ENCODE measurements at regions of chr15 and their contacts with region 1.

Region 1: GRCh38 chr15:40323239-40323952 is at the start of gene INAFM2:
- DNase-seq: peak; percentile 79 to 97 (median 93)
- ATAC-seq: peak; percentile 90
- H3K4me3 ChIP-seq: peak within 1 kb of the TSS; percentile 34 to 45
- H3K4me3 Mint-ChIP-seq: peak within 1 kb of the TSS; percentile 80
- H3K27ac ChIP-seq: peak within 1 kb of the TSS in 1 of 2 experiments; percentile 47
- H3K27ac Mint-ChIP-seq: peak within 1 kb of the TSS; percentile 74
- H3K4me1 ChIP-seq: peaks cover 21% of the 10 kb centered on the region
- H3K4me1 Mint-ChIP-seq: peaks cover 22% of the 10 kb centered on the region
- H3K27me3 ChIP-seq: no peaks in the 10 kb centered on the region
- H3K27me3 Mint-ChIP-seq: no peaks in the 10 kb centered on the region
- CTCF ChIP-seq: peak; percentile 60
- total RNA-seq, gene INAFM2: 4.3 to 8.1 TPM

Region 2: GRCh38 chr15:40160689-40161688 is 162.4 kb before region 1 on chr15 and contains the start of gene BUB1B:
- CTCF ChIA-PET with region 1: no interaction called
- POLR2A ChIA-PET with region 1: no interaction called
- intact Hi-C with region 1: loop called in 1 of 2 experiments (anchors 5 kb)
- DNase-seq: peak; percentile 82 to 96 (median 91)
- ATAC-seq: peak; percentile 98
- H3K4me3 ChIP-seq: peak within 1 kb of the TSS; percentile 61 to 71
- H3K4me3 Mint-ChIP-seq: no peak within 1 kb of the TSS
- H3K27ac ChIP-seq: no peak within 1 kb of the TSS
- H3K27ac Mint-ChIP-seq: no peak within 1 kb of the TSS
- H3K4me1 ChIP-seq: peaks cover 10% of the 10 kb centered on the region
- H3K4me1 Mint-ChIP-seq: no peaks in the 10 kb centered on the region
- H3K27me3 ChIP-seq: no peaks in the 10 kb centered on the region
- H3K27me3 Mint-ChIP-seq: no peaks in the 10 kb centered on the region
- CTCF ChIP-seq: no peak
- total RNA-seq, gene BUB1B: 0.47 to 1.2 TPM

Region 3: DNA sequence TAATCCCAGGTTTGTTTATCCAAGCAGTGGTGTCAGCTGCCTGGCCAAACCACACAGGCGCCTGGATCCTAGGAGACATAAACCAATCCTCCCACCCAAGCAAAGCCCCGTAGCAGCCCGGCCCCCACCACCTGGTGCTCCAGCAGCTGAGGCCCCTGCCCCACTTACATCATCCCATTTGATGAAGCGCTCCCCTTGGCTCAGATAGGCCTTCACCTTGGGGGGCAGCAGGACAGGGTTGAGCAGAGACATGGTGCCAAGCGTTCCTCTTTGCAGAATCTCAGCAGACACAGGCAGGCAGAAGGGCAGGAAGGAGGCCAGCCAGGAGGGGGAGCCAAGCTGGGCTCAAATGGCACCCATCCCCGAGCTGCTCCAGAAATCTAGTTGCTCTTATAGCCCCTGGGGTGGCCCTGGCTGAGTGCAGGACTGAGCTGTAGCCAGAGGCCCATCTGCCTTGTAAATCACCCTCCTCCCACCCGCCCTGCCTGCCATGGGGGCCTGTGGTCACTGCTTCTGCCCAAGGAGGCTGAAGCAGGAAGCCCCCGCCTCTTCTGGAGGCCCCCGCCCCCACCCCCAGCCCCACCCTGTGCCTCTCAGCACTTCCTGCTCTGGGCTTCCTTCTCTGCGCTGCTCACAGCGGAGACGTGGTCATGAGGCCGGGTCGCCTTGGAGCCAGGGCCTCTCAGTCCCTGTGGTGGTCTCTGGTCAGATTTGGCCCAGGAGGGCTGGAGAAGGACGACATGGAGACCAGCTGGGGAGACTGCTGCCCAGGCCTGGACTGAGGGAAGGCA is 15.8 kb before region 1 on chr15 and contains the start of gene PLCB2:
- CTCF ChIA-PET with region 1: interaction called, 114 read pairs
- POLR2A ChIA-PET with region 1: interaction called, 68 read pairs
- intact Hi-C with region 1: loop called (anchors 1 kb)
- DNase-seq: peak; percentile 45 to 86 (median 72)
- ATAC-seq: peak; percentile 76
- H3K4me3 ChIP-seq: peak within 1 kb of the TSS; percentile 92 to 97
- H3K4me3 Mint-ChIP-seq: peak within 1 kb of the TSS; percentile 95
- H3K27ac ChIP-seq: peak within 1 kb of the TSS; percentile 76 to 87
- H3K27ac Mint-ChIP-seq: peak within 1 kb of the TSS; percentile 96
- H3K4me1 ChIP-seq: peaks cover 31% of the 10 kb centered on the region
- H3K4me1 Mint-ChIP-seq: peaks cover 46% of the 10 kb centered on the region
- H3K27me3 ChIP-seq: no peaks in the 10 kb centered on the region
- H3K27me3 Mint-ChIP-seq: no peaks in the 10 kb centered on the region
- CTCF ChIP-seq: peak; percentile 57
- total RNA-seq, gene PLCB2: 154 to 167 TPM

Region 4: GRCh38 chr15:40357723-40358470 is 34.5 kb after region 1 on chr15 and contains the start of gene DISP2:
- CTCF ChIA-PET with region 1: interaction called, 5 read pairs
- POLR2A ChIA-PET with region 1: no interaction called
- intact Hi-C with region 1: loop called (anchors 1 to 5 kb)
- DNase-seq: peak; percentile 82 to 93 (median 88)
- ATAC-seq: peak; percentile 94
- H3K4me3 ChIP-seq: peak within 1 kb of the TSS; percentile 63 to 65
- H3K4me3 Mint-ChIP-seq: peak within 1 kb of the TSS; percentile 83
- H3K27ac ChIP-seq: no peak within 1 kb of the TSS
- H3K27ac Mint-ChIP-seq: no peak within 1 kb of the TSS
- H3K4me1 ChIP-seq: peaks cover 13% of the 10 kb centered on the region
- H3K4me1 Mint-ChIP-seq: peaks cover 9% of the 10 kb centered on the region
- H3K27me3 ChIP-seq: no peaks in the 10 kb centered on the region
- H3K27me3 Mint-ChIP-seq: peaks cover 2% of the 10 kb centered on the region
- CTCF ChIP-seq: no peak
- total RNA-seq, gene DISP2: 0.05 to 0.25 TPM

Region 5: GRCh38 chr15:40367686-40368611 is 44.6 kb after region 1 on chr15:
- CTCF ChIA-PET with region 1: interaction called, 5 read pairs
- POLR2A ChIA-PET with region 1: no interaction called
- intact Hi-C with region 1: loop called in 1 of 2 experiments (anchors 1 kb)
- DNase-seq: peak; percentile 74 to 96 (median 85)
- ATAC-seq: peak; percentile 95
- H3K4me3 ChIP-seq: peak overlapping the region; percentile 58 to 75
- H3K4me3 Mint-ChIP-seq: peak overlapping the region; percentile 83
- H3K27ac ChIP-seq: peak overlapping the region; percentile 17 to 62
- H3K27ac Mint-ChIP-seq: peak overlapping the region; percentile 84
- H3K4me1 ChIP-seq: peaks cover 23% of the 10 kb centered on the region
- H3K4me1 Mint-ChIP-seq: peaks cover 19% of the 10 kb centered on the region
- H3K27me3 ChIP-seq: no peaks in the 10 kb centered on the region
- H3K27me3 Mint-ChIP-seq: no peaks in the 10 kb centered on the region
- CTCF ChIP-seq: peak; percentile 92

Region 6: GRCh38 chr15:40421246-40422157 is 98.1 kb after region 1 on chr15:
- CTCF ChIA-PET with region 1: interaction called, 12 read pairs
- POLR2A ChIA-PET with region 1: no interaction called
- intact Hi-C with region 1: loop called in 1 of 2 experiments (anchors 1 kb)
- DNase-seq: peak; percentile 65 to 89 (median 80)
- ATAC-seq: peak; percentile 99
- H3K4me3 ChIP-seq: no peak overlapping the region
- H3K4me3 Mint-ChIP-seq: no peak overlapping the region
- H3K27ac ChIP-seq: no peak overlapping the region
- H3K27ac Mint-ChIP-seq: no peak overlapping the region
- H3K4me1 ChIP-seq: peaks cover 6% of the 10 kb centered on the region
- H3K4me1 Mint-ChIP-seq: no peaks in the 10 kb centered on the region
- H3K27me3 ChIP-seq: no peaks in the 10 kb centered on the region
- H3K27me3 Mint-ChIP-seq: no peaks in the 10 kb centered on the region
- CTCF ChIP-seq: peak; percentile 80

Region 7: DNA sequence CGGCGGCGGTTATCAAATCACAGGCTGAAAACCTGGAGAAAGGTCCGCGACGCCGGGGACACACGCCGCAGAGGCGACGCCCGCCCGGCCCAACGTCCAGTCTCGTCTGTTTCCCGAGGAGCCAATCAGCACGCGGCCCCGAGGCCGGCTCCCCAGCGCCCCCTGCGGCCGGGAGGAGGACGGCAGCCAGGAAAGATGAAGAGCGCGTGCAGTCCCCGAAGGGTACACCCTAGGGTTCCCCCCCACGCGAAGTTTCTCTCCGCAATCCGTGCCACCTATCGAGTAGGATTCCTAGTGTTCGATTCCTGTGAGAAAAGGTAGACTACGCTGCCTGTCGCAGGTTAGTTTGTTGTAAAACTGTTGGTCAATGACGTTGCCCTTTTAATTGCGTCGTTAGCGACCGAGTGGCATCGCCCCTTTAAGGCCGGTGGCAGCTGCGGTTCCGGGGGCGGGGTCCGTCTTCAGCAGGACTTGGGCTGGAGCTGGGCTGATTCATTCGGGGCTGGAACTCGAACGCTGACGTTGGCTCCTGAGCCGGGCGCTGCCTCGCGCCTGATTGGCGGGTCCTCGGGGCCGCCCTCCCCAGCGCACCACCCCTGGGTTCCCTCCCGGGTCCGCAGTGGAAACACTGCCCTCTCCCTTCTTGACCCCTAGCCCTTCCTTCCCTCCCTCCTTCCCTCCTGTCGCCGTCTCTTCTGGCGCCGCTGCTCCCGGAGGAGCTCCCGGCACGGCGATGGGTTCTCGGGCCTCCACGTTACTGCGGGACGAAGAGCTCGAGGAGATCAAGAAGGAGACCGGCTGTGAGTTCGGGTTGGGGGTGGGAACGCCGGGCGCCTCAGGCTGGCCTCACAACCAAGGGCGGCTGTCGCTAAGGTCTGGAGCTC is 907.5 kb after region 1 on chr15 and contains the starts of genes CHP1 and EXD1:
- CTCF ChIA-PET with region 1: no interaction called
- POLR2A ChIA-PET with region 1: no interaction called
- intact Hi-C with region 1: loop called in 1 of 2 experiments (anchors 5 kb)
- DNase-seq: peak; percentile 89 to 97 (median 94)
- ATAC-seq: peak; percentile 95
- H3K4me3 ChIP-seq: peak within 1 kb of the TSS; percentile 83 to 89
- H3K4me3 Mint-ChIP-seq: peak within 1 kb of the TSS; percentile 89
- H3K27ac ChIP-seq: peak within 1 kb of the TSS; percentile 74 to 85
- H3K27ac Mint-ChIP-seq: peak within 1 kb of the TSS; percentile 90
- H3K4me1 ChIP-seq: peaks cover 27% of the 10 kb centered on the region
- H3K4me1 Mint-ChIP-seq: peaks cover 37% of the 10 kb centered on the region
- H3K27me3 ChIP-seq: no peaks in the 10 kb centered on the region
- H3K27me3 Mint-ChIP-seq: no peaks in the 10 kb centered on the region
- CTCF ChIP-seq: peak; percentile 99
- total RNA-seq, gene CHP1: 25.6 to 28.9 TPM
- total RNA-seq, gene EXD1: not detected

Measured in CD8-positive, alpha-beta T cell (primary cell).